ENCODE measurements at regions of chr3 and their contacts with region 1.

Region 1: GRCh38 chr3:194472290-194472920 is 14.4 kb downstream of the ATP13A3 start:
- DNase-seq: no peak
- ATAC-seq: peak in 3 of 4 donors; percentile 59 to 80 (median 71)
- H3K4me3 ChIP-seq: no peak overlapping the region
- H3K27ac ChIP-seq: no peak overlapping the region
- H3K4me1 ChIP-seq: peaks cover 33% of the 10 kb centered on the region
- H3K27me3 ChIP-seq: no peaks in the 10 kb centered on the region
- CTCF ChIP-seq: peak; percentile 97

Region 2: GRCh38 chr3:194431553-194431952 is 40.9 kb before region 1 on chr3:
- intact Hi-C with region 1: no loop called
- DNase-seq: no peak
- ATAC-seq: no peak
- H3K4me3 ChIP-seq: no peak overlapping the region
- H3K27ac ChIP-seq: no peak overlapping the region
- H3K4me1 ChIP-seq: no peaks in the 10 kb centered on the region
- H3K27me3 ChIP-seq: no peaks in the 10 kb centered on the region
- CTCF ChIP-seq: no peak

Region 3: GRCh38 chr3:194573691-194574437 is 101.5 kb after region 1 on chr3:
- intact Hi-C with region 1: loop called in 1 of 2 experiments (anchors 5 kb)
- DNase-seq: peak; percentile 26 to 55
- ATAC-seq: peak; percentile 51 to 78 (median 68)
- H3K4me3 ChIP-seq: no peak overlapping the region
- H3K27ac ChIP-seq: no peak overlapping the region
- H3K4me1 ChIP-seq: peaks cover 19% of the 10 kb centered on the region
- H3K27me3 ChIP-seq: peaks cover 0 to 7% (median 1%) of the 10 kb centered on the region in 3 donors
- CTCF ChIP-seq: peak; percentile 52

Region 4: DNA sequence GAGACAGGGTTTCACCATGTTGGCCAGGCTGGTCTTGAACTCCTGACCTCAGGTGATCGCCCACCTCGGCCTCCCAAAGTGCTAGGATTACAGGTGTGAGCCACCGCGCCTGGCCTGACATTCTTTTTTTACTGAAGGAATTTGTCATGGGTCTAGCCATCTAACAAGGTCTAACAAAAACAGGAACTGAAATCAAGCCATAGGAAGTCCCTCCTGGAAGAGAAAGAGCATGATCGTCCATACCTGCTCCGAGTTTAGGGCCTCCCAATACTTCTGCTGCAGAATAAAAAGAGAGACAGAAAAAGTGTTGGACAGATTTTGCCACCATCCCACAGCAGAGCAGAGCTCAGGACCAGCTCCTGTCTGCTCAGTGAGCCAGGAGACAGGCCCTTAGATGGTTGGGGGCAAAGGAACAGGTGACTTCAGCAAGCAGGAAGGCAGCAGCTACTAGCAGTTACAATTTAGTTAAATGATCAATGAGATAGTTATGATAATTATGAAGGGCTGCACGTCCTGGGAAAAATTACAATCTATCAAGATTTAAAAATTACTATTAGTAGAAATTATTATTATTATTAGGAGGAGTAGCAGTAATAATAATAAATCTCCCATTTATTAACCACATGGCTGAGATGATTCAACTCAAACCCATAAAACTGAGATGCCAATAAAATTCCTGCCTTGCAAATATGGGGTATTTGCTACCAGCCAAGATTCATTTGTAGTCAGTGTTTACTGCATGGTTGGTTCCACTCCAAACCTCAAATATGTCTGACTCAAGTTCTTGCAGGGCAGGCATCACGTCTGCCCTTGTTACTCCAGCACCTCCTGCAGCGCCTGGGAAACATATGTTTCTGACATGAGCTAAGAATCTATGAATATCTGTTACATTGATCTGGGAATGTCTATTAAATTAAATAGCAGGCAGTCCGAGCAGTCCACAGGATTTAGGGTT is 120.7 kb after region 1 on chr3:
- intact Hi-C with region 1: loop called (anchors 1 to 2 kb)
- DNase-seq: no peak
- ATAC-seq: peak; percentile 72 to 91 (median 86)
- H3K4me3 ChIP-seq: no peak overlapping the region
- H3K27ac ChIP-seq: peak overlapping the region; percentile 36
- H3K4me1 ChIP-seq: peaks cover 11% of the 10 kb centered on the region
- H3K27me3 ChIP-seq: no peaks in the 10 kb centered on the region
- CTCF ChIP-seq: no peak